ENCODE measurements at regions of chr1 and their contacts with region 1.

Region 1: GRCh38 chr1:201042779-201043461 is 19.4 kb upstream of the KIF21B start:
- DNase-seq: peak; percentile 38 to 85 (median 67)
- ATAC-seq: peak; percentile 88 to 97 (median 90)
- H3K4me3 ChIP-seq: no peak overlapping the region
- H3K4me3 Mint-ChIP-seq: no peak overlapping the region
- H3K27ac ChIP-seq: no peak overlapping the region
- H3K27ac Mint-ChIP-seq: no peak overlapping the region
- H3K4me1 ChIP-seq: peaks cover 0 to 4% of the 10 kb centered on the region in 2 experiments
- H3K4me1 Mint-ChIP-seq: peaks cover 0 to 3% (median 3%) of the 10 kb centered on the region in 3 donors
- H3K27me3 ChIP-seq: no peaks in the 10 kb centered on the region
- H3K27me3 Mint-ChIP-seq: no peaks in the 10 kb centered on the region

Region 2: DNA sequence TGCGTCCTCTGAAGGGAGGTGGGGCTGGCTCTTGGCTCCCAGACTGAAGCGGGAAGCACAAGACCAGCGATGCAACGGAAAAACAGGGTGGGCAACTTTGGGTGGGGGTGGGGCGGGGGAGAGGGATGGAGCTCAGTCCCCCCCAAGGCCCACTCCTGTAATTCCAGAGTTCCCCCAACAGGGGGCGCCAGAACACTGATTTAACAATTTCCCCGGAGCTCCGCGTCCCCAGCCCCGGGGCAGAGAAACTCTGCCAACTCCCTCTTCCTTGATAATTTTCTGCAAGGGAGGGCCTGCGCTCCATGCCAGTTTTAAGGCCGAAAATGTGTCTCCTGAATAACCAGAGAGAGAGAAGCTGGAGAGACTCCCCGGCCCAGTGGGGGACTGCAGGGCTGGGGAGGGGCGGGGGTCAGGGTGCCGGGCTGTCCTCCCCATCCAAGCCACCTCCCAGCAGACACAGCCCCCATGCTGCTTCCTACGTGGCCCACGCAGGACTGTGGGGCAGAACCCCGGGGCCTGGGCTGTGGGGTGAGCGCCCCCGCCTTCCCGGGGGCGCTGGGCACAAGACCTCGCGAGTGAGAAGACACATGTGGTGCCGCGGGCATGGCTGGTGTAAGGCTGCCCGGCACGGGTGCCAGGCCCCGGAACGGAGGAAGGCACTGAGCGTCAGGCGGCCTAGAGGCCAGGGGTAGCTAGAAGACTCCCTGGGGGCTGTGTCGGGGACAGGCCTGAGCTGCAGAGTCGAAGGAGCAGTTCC is 70.8 kb before region 1 on chr1:
- CTCF ChIA-PET with region 1: interaction called, 45 to 49 read pairs
- POLR2A ChIA-PET with region 1: no interaction called
- DNase-seq: peak; percentile 13 to 72 (median 62)
- ATAC-seq: peak; percentile 43 to 65 (median 54)
- H3K4me3 ChIP-seq: no peak overlapping the region
- H3K4me3 Mint-ChIP-seq: no peak overlapping the region
- H3K27ac ChIP-seq: no peak overlapping the region
- H3K27ac Mint-ChIP-seq: no peak overlapping the region
- H3K4me1 ChIP-seq: no peaks in the 10 kb centered on the region
- H3K4me1 Mint-ChIP-seq: peaks cover 0 to 8% (median 2%) of the 10 kb centered on the region in 3 donors
- H3K27me3 ChIP-seq: no peaks in the 10 kb centered on the region
- H3K27me3 Mint-ChIP-seq: no peaks in the 10 kb centered on the region

Region 3: GRCh38 chr1:200979574-200980451 is 63.1 kb before region 1 on chr1:
- CTCF ChIA-PET with region 1: interaction called, 21 to 23 read pairs
- POLR2A ChIA-PET with region 1: no interaction called
- DNase-seq: peak in 30 of 35 experiments; percentile 19 to 75 (median 49)
- ATAC-seq: peak; percentile 43 to 75 (median 56)
- H3K4me3 ChIP-seq: no peak overlapping the region
- H3K4me3 Mint-ChIP-seq: no peak overlapping the region
- H3K27ac ChIP-seq: no peak overlapping the region
- H3K27ac Mint-ChIP-seq: no peak overlapping the region
- H3K4me1 ChIP-seq: no peaks in the 10 kb centered on the region
- H3K4me1 Mint-ChIP-seq: no peaks in the 10 kb centered on the region
- H3K27me3 ChIP-seq: no peaks in the 10 kb centered on the region
- H3K27me3 Mint-ChIP-seq: no peaks in the 10 kb centered on the region

Region 4: DNA sequence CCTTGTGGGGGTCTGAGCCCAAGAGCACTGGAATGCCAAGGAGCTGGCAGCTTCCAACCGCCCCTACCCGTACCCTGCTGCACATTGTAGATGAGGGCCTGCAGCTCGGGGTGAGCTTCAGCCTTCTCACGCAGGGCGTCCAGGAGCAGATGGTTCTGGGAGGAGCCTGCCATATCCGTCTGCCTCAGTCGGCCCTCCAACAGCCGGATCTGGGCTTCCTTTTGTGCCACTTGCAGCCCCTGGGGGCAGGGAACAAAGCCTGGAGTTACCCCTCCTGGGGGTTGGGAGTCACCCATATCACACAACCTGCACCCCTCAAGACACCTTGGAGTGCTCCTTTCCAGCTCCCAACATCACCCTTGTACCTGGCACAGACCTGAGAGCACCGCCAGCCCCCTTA is 54.2 kb before region 1 on chr1:
- CTCF ChIA-PET with region 1: interaction called in 1 of 2 experiments, 12 read pairs
- POLR2A ChIA-PET with region 1: no interaction called
- DNase-seq: no peak
- ATAC-seq: no peak
- H3K4me3 ChIP-seq: no peak overlapping the region
- H3K4me3 Mint-ChIP-seq: no peak overlapping the region
- H3K27ac ChIP-seq: no peak overlapping the region
- H3K27ac Mint-ChIP-seq: peak overlapping the region in 1 of 2 donors; percentile 6
- H3K4me1 ChIP-seq: no peaks in the 10 kb centered on the region
- H3K4me1 Mint-ChIP-seq: no peaks in the 10 kb centered on the region
- H3K27me3 ChIP-seq: no peaks in the 10 kb centered on the region
- H3K27me3 Mint-ChIP-seq: no peaks in the 10 kb centered on the region

Region 5: DNA sequence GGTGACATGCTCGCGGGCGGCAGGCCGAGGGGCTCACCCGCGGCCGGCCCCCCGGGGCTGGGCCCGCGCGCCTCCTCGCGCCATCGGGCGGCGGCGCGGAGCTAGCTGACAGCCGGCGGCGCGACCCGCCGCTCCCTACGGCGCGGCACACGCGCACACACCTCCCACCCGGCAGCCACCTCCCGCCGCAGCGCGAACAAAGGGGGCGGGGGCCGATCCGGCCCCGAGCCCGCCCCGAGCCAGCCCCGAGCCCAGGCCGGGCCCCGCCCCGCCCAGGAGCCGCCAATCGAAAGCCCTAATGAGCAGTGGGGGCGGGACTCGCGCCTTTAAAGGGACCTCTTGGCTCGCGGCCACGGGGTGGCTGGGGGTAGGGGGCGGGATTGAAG is 19.4 kb before region 1 on chr1 and contains the start of gene KIF21B:
- CTCF ChIA-PET with region 1: interaction called, 13 to 16 read pairs
- POLR2A ChIA-PET with region 1: no interaction called
- DNase-seq: peak; percentile 82 to 94 (median 90)
- ATAC-seq: peak; percentile 81 to 88 (median 82)
- H3K4me3 ChIP-seq: peak within 1 kb of the TSS; percentile 80 to 94
- H3K4me3 Mint-ChIP-seq: peak within 1 kb of the TSS; percentile 89 to 99 (median 98)
- H3K27ac ChIP-seq: peak within 1 kb of the TSS; percentile 88
- H3K27ac Mint-ChIP-seq: peak within 1 kb of the TSS; percentile 99 to 100
- H3K4me1 ChIP-seq: peaks cover 42 to 70% of the 10 kb centered on the region in 2 experiments
- H3K4me1 Mint-ChIP-seq: peaks cover 66 to 73% (median 73%) of the 10 kb centered on the region in 3 donors
- H3K27me3 ChIP-seq: no peaks in the 10 kb centered on the region
- H3K27me3 Mint-ChIP-seq: no peaks in the 10 kb centered on the region
- total RNA-seq, gene KIF21B: 70.8 to 110 (median 101) TPM

Measured in T-cell (primary cell).